Caco-2 (cell line): ENCODE measurements at regions of chr2 and their contacts with region 1.

Region 1: DNA sequence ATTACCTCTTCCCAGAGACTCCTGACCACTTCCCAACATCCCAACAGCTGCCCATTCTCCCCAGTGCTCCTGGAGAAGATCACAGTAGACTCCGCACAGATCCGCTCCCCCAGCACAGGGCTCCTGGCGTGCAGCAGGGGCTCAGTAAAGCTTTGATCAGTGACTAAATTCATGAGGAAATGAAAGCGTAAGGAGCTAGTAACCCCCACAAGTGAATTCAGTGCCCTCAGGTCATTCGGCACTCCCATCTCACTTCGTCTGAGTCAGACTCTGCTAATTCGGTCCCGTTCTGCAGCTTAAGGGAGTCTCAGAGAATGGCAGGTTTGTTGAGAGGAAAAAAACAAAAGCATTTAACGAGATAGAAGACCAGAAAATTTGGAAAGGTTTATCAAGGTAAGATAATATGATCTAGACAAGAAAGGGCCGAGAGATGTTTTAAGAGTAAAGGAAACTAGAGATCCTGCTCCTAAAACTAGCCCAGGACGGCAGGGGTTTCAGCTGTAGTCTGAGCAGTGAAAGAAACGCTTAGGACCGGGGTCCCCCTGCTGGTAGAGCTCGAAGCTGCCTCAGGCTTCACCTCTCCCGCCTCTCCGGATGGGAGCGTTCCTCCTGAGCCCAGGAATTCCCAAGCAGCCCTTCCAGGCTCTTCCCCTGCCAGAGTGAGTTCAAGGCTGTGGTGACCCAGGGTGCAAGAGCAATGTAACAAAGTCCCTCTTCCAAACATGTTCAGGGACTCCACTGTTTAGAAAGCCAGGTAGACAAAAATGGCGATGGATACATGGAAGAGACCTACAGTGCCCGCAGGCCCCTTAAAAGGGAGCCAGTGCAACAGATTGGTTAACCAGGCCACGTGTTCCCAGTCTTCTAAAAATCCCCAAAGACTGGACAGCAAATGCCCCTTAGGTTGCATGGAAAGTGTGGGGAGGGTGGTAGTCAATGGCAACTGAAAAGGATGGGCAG is 127.3 kb downstream of the DNER start:
- DNase-seq: peak; percentile 61 to 74
- H3K4me3 ChIP-seq: no peak overlapping the region
- H3K4me3 Mint-ChIP-seq: no peak overlapping the region
- H3K27ac Mint-ChIP-seq: no peak overlapping the region
- H3K4me1 ChIP-seq: no peaks in the 10 kb centered on the region
- H3K4me1 Mint-ChIP-seq: no peaks in the 10 kb centered on the region
- H3K27me3 ChIP-seq: no peaks in the 10 kb centered on the region
- H3K27me3 Mint-ChIP-seq: peaks cover 5% of the 10 kb centered on the region
- CTCF ChIP-seq: peak; percentile 78 to 83

Region 2: DNA sequence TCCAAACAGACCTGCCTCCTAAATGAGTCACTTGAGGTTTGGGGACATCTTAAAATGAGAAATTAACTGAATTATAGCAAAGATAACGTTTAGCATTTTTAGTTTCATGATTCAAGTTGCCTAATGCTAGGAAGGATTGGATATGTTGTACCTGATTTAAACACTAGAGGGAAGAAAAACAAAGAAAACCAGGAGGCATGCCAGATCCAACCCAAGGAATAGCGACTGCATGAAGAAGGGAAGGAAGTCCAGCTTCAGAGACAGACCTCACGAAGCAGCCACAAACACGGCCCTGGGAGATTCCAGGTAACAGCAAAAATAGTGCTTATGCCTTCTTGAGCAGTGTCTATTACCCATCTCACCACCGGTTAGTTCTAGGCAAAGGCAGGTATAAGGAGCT is 905.6 kb before region 1 on chr2:
- CTCF ChIA-PET with region 1: no interaction called
- POLR2A ChIA-PET with region 1: no interaction called
- intact Hi-C with region 1: loop called (anchors 5 kb)
- DNase-seq: no peak
- H3K4me3 ChIP-seq: no peak overlapping the region
- H3K4me3 Mint-ChIP-seq: no peak overlapping the region
- H3K27ac Mint-ChIP-seq: no peak overlapping the region
- H3K4me1 ChIP-seq: no peaks in the 10 kb centered on the region
- H3K4me1 Mint-ChIP-seq: no peaks in the 10 kb centered on the region
- H3K27me3 ChIP-seq: no peaks in the 10 kb centered on the region
- H3K27me3 Mint-ChIP-seq: no peaks in the 10 kb centered on the region
- CTCF ChIP-seq: peak in 1 of 2 experiments; percentile 13

Region 3: DNA sequence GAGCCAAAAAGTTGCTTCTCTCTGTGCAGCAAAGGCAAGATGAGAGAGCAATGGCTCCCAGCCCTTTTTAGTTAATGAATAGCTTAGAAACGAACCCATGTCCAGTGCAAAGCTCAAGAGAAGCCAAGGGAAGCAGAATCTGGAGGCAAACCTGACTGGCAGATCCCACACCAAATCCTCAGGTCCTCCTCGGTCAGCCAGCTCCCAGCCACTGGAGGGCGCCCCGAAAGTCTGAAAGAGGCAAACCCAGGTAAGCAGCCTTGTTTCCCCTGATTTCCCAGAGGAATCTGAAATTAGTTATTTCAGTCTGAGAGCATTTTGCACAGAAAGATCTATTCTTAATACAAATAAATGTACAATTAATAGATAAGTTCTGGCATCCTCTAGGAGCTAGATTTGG is 244.7 kb before region 1 on chr2:
- CTCF ChIA-PET with region 1: interaction called, 4 read pairs
- POLR2A ChIA-PET with region 1: no interaction called
- intact Hi-C with region 1: loop called (anchors 1 kb)
- DNase-seq: peak; percentile 53 to 54
- H3K4me3 ChIP-seq: no peak overlapping the region
- H3K4me3 Mint-ChIP-seq: no peak overlapping the region
- H3K27ac Mint-ChIP-seq: no peak overlapping the region
- H3K4me1 ChIP-seq: no peaks in the 10 kb centered on the region
- H3K4me1 Mint-ChIP-seq: no peaks in the 10 kb centered on the region
- H3K27me3 ChIP-seq: no peaks in the 10 kb centered on the region
- H3K27me3 Mint-ChIP-seq: peaks cover 5% of the 10 kb centered on the region
- CTCF ChIP-seq: peak; percentile 33 to 61

Region 4: GRCh38 chr2:229431327-229431954 is 155.6 kb before region 1 on chr2:
- CTCF ChIA-PET with region 1: interaction called, 28 read pairs
- POLR2A ChIA-PET with region 1: no interaction called
- intact Hi-C with region 1: loop called (anchors 1 kb)
- DNase-seq: peak in 1 of 2 experiments; percentile 13
- H3K4me3 ChIP-seq: no peak overlapping the region
- H3K4me3 Mint-ChIP-seq: no peak overlapping the region
- H3K27ac Mint-ChIP-seq: no peak overlapping the region
- H3K4me1 ChIP-seq: no peaks in the 10 kb centered on the region
- H3K4me1 Mint-ChIP-seq: no peaks in the 10 kb centered on the region
- H3K27me3 ChIP-seq: no peaks in the 10 kb centered on the region
- H3K27me3 Mint-ChIP-seq: peaks cover 9% of the 10 kb centered on the region
- CTCF ChIP-seq: peak; percentile 15 to 31